HEK293 (cell line): ENCODE measurements at regions of chr20 and their contacts with region 1.

Region 1: GRCh38 chr20:59508729-59509128 is 95.6 kb upstream of the PHACTR3 start:
- H3K4me3 ChIP-seq: no peak overlapping the region
- H3K27ac ChIP-seq: no peak overlapping the region
- H3K4me1 ChIP-seq: no peaks in the 10 kb centered on the region
- CTCF ChIP-seq: no peak

Region 2: DNA sequence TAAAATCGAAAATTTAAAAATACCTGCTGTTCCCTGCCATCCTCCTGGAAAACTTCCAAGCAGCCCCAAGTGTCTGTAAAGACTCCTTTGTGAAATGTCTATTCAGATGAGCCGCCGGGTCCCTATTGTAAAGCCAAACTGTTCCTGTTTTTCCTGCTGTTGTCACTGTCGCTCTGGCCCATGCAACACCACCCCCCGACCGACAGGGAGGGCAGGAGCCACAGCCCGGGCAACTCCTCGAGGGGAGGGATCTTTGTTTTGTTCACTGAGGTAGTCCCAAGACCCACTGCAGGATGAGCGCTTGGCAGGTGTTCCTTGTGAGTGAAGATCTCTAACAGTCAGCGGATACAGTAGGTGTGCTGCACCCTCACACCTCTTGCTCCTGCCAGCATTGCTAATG is 36.7 kb before region 1 on chr20:
- CTCF ChIA-PET with region 1: no interaction called
- POLR2A ChIA-PET with region 1: no interaction called
- H3K4me3 ChIP-seq: no peak overlapping the region
- H3K27ac ChIP-seq: no peak overlapping the region
- H3K4me1 ChIP-seq: no peaks in the 10 kb centered on the region
- CTCF ChIP-seq: no peak

Region 3: GRCh38 chr20:59495894-59496510 is 12.7 kb before region 1 on chr20:
- CTCF ChIA-PET with region 1: interaction called, 16 read pairs
- POLR2A ChIA-PET with region 1: no interaction called
- H3K4me3 ChIP-seq: no peak overlapping the region
- H3K27ac ChIP-seq: no peak overlapping the region
- H3K4me1 ChIP-seq: no peaks in the 10 kb centered on the region
- CTCF ChIP-seq: peak; percentile 78

Region 4: DNA sequence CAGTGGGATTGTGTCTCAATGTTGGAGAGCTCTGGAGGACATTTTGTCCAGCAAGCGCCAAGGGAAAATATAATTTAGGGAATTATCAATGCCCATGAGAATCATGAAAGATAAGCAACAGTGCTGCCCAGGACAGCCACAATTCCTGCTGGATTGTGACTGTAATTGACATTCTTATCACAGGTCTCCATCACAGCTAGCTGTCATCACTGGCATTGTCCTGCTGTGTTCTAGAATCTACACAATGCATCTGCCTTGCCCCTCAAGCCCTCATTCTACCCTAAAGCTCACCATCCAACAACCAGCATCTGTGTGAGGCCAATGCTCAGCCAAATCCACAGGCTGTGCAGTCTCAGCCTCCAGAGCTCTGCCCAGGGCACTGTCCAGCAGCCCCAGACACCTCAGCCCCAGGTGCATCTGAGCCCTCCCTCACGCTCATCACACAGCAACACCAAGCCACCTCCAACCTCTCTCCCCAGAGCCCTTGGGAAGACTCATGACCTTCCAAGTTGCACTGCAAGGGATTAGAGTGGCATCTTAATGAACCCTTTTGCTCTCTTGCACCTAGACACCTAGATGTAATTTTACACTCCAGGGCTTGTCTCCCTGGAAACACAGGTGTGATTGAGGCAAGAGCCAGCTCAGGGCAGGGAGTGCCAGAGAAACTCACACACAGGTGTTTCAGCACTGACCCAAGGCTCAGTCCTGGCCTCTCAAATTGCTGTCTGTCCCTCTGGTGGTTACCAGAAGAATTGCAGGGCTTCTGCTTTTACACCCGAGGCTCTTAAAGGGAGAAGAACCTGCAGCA is 10.4 kb after region 1 on chr20:
- CTCF ChIA-PET with region 1: interaction called, 17 read pairs
- POLR2A ChIA-PET with region 1: no interaction called
- H3K4me3 ChIP-seq: no peak overlapping the region
- H3K27ac ChIP-seq: no peak overlapping the region
- H3K4me1 ChIP-seq: no peaks in the 10 kb centered on the region
- CTCF ChIP-seq: peak; percentile 21; the same call in 1 of the 2 replicates

Region 5: GRCh38 chr20:59525500-59526241 is 16.9 kb after region 1 on chr20:
- CTCF ChIA-PET with region 1: interaction called, 97 read pairs
- POLR2A ChIA-PET with region 1: no interaction called
- H3K4me3 ChIP-seq: no peak overlapping the region
- H3K27ac ChIP-seq: no peak overlapping the region
- H3K4me1 ChIP-seq: no peaks in the 10 kb centered on the region
- CTCF ChIP-seq: peak; percentile 68